ENCODE measurements at regions of chr18 and their contacts with region 1.

Region 1: GRCh38 chr18:23220355-23220754 is 85.1 kb downstream of the CABLES1 start:
- DNase-seq: no peak
- H3K4me3 ChIP-seq: no peak overlapping the region
- H3K27ac ChIP-seq: no peak overlapping the region
- H3K4me1 ChIP-seq: peaks cover 5% of the 10 kb centered on the region
- H3K27me3 ChIP-seq: no peaks in the 10 kb centered on the region
- CTCF ChIP-seq: no peak

Region 2: GRCh38 chr18:23169657-23170044 is 50.7 kb before region 1 on chr18:
- CTCF ChIA-PET with region 1: no interaction called
- dilution Hi-C with region 1: loop called (anchors 5 kb)
- in situ Hi-C with region 1: no loop called
- intact Hi-C with region 1: no loop called
- DNase-seq: no peak
- H3K4me3 ChIP-seq: no peak overlapping the region
- H3K27ac ChIP-seq: no peak overlapping the region
- H3K4me1 ChIP-seq: peaks cover 7% of the 10 kb centered on the region
- H3K27me3 ChIP-seq: no peaks in the 10 kb centered on the region
- CTCF ChIP-seq: no peak

Region 3: DNA sequence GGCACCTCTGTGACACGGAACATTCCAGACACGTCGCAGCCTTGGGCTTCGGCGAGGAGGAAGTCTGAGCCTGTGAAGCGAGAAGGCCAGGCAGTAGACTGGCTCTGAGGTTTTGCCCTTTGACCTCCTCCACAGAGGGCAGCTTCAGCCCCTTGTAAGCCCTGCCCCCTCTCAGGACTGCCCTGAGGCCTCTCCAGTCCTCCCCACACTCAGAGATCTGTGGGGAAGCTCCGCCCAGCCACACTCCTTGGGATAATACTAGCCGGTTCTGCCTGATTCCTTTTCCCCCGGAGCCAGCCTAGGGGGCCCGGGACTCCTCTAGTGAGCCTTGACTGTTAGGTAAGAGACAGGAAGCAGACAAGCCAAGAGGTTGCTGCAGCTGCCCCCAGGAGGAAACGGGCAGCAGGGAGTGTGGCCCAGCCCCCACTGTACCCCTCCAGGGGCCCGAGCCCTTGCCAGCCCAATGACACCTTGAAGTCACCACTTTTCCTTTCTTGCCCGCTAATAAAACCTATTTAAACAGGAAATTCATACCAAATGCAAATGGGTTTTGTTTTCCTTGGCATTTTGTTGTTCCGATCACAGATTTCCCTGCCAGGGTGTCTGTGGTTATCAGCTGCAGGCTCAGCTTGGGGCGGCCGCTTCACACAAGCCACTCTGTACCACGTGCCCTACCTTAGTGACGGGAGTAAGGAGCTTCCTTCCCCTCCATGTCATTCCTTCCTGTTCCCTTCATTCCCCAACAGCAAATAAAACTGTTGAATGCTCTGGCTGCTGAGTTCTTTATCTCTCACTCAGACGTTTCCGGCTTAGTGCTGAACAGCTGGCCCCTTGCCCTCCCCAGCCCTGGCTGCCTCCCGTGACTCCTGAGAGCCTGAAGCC is 39.6 kb after region 1 on chr18:
- CTCF ChIA-PET with region 1: no interaction called
- dilution Hi-C with region 1: no loop called
- in situ Hi-C with region 1: no loop called
- intact Hi-C with region 1: loop called (anchors 5 kb)
- DNase-seq: peak; percentile 46
- H3K4me3 ChIP-seq: no peak overlapping the region
- H3K27ac ChIP-seq: no peak overlapping the region
- H3K4me1 ChIP-seq: peaks cover 30% of the 10 kb centered on the region
- H3K27me3 ChIP-seq: no peaks in the 10 kb centered on the region
- CTCF ChIP-seq: no peak